ENCODE measurements at regions of chr17 and their contacts with region 1.

Region 1: GRCh38 chr17:41665566-41666236 is 23.0 kb upstream of the EIF1 start:
- DNase-seq: peak; percentile 67
- ATAC-seq: peak; percentile 82
- H3K4me3 ChIP-seq: peak overlapping the region; percentile 73
- H3K27ac ChIP-seq: peak overlapping the region; percentile 67
- H3K4me1 ChIP-seq: peaks cover 39% of the 10 kb centered on the region
- H3K27me3 ChIP-seq: no peaks in the 10 kb centered on the region
- CTCF ChIP-seq: peak; percentile 90 to 97 (median 95); a peak in 5 of 6 replicates
- EP300 ChIP-seq: peak in 1 of 2 experiments; percentile 31; a peak in 1 of 4 replicates
- POLR2A ChIP-seq: peak; percentile 66
- RAD21 ChIP-seq: no peak

Region 2: GRCh38 chr17:40536295-40537171 is 1129.2 kb before region 1 on chr17:
- CTCF ChIA-PET with region 1: interaction called, 11 read pairs
- POLR2A ChIA-PET with region 1: no interaction called
- RAD21 ChIA-PET with region 1: interaction called, 3 read pairs
- SMC1A ChIA-PET with region 1: no interaction called
- in situ Hi-C with region 1: no loop called
- intact Hi-C with region 1: no loop called
- DNase-seq: no peak
- ATAC-seq: no peak
- H3K4me3 ChIP-seq: no peak overlapping the region
- H3K27ac ChIP-seq: no peak overlapping the region
- H3K4me1 ChIP-seq: peaks cover 64% of the 10 kb centered on the region
- H3K27me3 ChIP-seq: no peaks in the 10 kb centered on the region; a peak in 1 of 4 replicates
- CTCF ChIP-seq: no peak
- EP300 ChIP-seq: no peak
- POLR2A ChIP-seq: no peak
- RAD21 ChIP-seq: no peak

Region 3: GRCh38 chr17:40818733-40819527 is 846.8 kb before region 1 on chr17:
- CTCF ChIA-PET with region 1: interaction called, 14 read pairs
- POLR2A ChIA-PET with region 1: interaction called, 3 read pairs
- RAD21 ChIA-PET with region 1: no interaction called
- SMC1A ChIA-PET with region 1: no interaction called
- in situ Hi-C with region 1: no loop called
- intact Hi-C with region 1: no loop called
- DNase-seq: no peak
- ATAC-seq: peak; percentile 91
- H3K4me3 ChIP-seq: peak overlapping the region; percentile 78
- H3K27ac ChIP-seq: peak overlapping the region; percentile 76
- H3K4me1 ChIP-seq: peaks cover 12% of the 10 kb centered on the region
- H3K27me3 ChIP-seq: no peaks in the 10 kb centered on the region
- CTCF ChIP-seq: no peak
- EP300 ChIP-seq: no peak
- POLR2A ChIP-seq: peak; percentile 85
- RAD21 ChIP-seq: no peak

Region 4: DNA sequence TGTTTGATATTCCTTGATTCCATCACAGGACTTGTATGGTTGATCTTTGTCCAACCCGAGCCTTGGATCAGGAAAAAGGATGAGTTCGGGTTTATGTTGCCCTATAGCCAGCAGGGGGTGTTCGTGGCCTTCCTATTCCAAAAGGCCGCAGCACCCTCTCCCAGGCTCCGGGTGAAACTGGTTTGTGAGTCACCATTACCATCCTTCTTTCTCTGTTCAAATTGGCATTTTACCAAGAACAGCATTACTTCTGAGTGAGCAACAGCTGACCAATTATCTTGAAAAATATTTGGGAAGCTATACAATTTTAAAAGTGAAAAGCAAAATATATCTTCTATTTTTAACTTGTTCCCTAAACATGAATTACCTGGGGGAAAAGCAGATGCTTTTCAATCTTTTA is 756.4 kb before region 1 on chr17:
- CTCF ChIA-PET with region 1: interaction called, 29 read pairs
- POLR2A ChIA-PET with region 1: no interaction called
- RAD21 ChIA-PET with region 1: interaction called, 3 read pairs
- SMC1A ChIA-PET with region 1: no interaction called
- in situ Hi-C with region 1: loop called (anchors 5 kb)
- intact Hi-C with region 1: loop called (anchors 1 kb)
- DNase-seq: no peak
- ATAC-seq: peak; percentile 84
- H3K4me3 ChIP-seq: no peak overlapping the region
- H3K27ac ChIP-seq: no peak overlapping the region
- H3K4me1 ChIP-seq: 0 out of 2 replicates have a peak, but pooled peaks cover 2% of the 10 kb centered on the region
- H3K27me3 ChIP-seq: peaks cover 0 to 4% of the 10 kb centered on the region in 2 experiments; a peak in 1 of 4 replicates
- CTCF ChIP-seq: peak; percentile 56 to 72 (median 68)
- EP300 ChIP-seq: no peak
- POLR2A ChIP-seq: no peak
- RAD21 ChIP-seq: peak; percentile 79

Region 5: GRCh38 chr17:41579484-41580243 is 86.0 kb before region 1 on chr17:
- CTCF ChIA-PET with region 1: interaction called, 4 read pairs
- POLR2A ChIA-PET with region 1: no interaction called
- RAD21 ChIA-PET with region 1: interaction called, 14 read pairs
- SMC1A ChIA-PET with region 1: interaction called, 7 read pairs
- in situ Hi-C with region 1: no loop called
- intact Hi-C with region 1: loop called (anchors 5 kb)
- DNase-seq: peak; percentile 21
- ATAC-seq: peak; percentile 98
- H3K4me3 ChIP-seq: no peak overlapping the region
- H3K27ac ChIP-seq: no peak overlapping the region
- H3K4me1 ChIP-seq: no peaks in the 10 kb centered on the region
- H3K27me3 ChIP-seq: no peaks in the 10 kb centered on the region; a peak in 2 of 4 replicates
- CTCF ChIP-seq: peak; percentile 62 to 82 (median 77)
- EP300 ChIP-seq: no peak
- POLR2A ChIP-seq: no peak
- RAD21 ChIP-seq: peak; percentile 52

Region 6: DNA sequence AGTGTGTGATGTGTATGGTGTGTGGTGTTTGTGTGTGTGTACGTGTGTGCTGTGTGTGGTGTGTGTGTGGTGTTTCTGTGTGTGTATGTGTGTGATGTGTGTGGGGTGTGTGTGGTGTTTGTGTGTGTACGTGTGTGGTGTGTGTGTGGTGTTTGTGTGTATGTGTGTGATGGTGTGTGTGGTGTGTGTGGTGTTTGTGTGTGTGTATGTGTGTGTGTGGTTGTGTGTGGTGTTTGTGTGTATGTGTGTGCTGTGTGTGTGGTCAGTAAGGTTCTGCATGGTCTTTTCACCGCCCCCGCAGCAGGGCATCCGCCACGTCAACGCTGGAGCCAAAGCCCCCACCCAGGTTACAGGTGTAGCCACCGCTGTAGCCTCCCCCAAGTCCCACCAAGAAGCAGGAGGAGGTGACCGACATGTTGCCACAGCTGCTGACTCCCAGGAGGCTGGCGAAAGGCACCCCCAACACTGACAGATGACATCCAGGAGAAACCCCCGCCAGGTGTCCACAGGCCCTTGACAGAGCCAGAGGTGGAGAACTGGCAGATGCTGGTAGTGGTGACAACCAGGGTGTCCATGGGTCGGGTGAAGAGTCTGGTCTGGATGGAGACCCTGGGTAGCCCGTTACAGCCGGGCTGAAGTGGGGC is 32.0 kb before region 1 on chr17:
- CTCF ChIA-PET with region 1: no interaction called
- POLR2A ChIA-PET with region 1: no interaction called
- RAD21 ChIA-PET with region 1: no interaction called
- SMC1A ChIA-PET with region 1: no interaction called
- in situ Hi-C with region 1: no loop called
- intact Hi-C with region 1: no loop called
- DNase-seq: no peak
- ATAC-seq: peak; percentile 45
- H3K4me3 ChIP-seq: no peak overlapping the region
- H3K27ac ChIP-seq: no peak overlapping the region
- H3K4me1 ChIP-seq: no peaks in the 10 kb centered on the region
- H3K27me3 ChIP-seq: no peaks in the 10 kb centered on the region; a peak in 1 of 4 replicates
- CTCF ChIP-seq: no peak
- EP300 ChIP-seq: no peak
- POLR2A ChIP-seq: no peak
- RAD21 ChIP-seq: no peak

Region 7: GRCh38 chr17:41648411-41649195 is 17.1 kb before region 1 on chr17:
- CTCF ChIA-PET with region 1: interaction called, 420 read pairs
- POLR2A ChIA-PET with region 1: interaction called, 19 read pairs
- RAD21 ChIA-PET with region 1: interaction called, 193 read pairs
- SMC1A ChIA-PET with region 1: interaction called, 62 read pairs
- in situ Hi-C with region 1: no loop called
- intact Hi-C with region 1: loop called (anchors 1 kb)
- DNase-seq: no peak
- ATAC-seq: peak; percentile 97
- H3K4me3 ChIP-seq: peak overlapping the region; percentile 57; the same call in 1 of the 2 replicates
- H3K27ac ChIP-seq: no peak overlapping the region
- H3K4me1 ChIP-seq: peaks cover 9% of the 10 kb centered on the region
- H3K27me3 ChIP-seq: no peaks in the 10 kb centered on the region
- CTCF ChIP-seq: peak; percentile 90 to 95 (median 91)
- EP300 ChIP-seq: no peak
- POLR2A ChIP-seq: no peak
- RAD21 ChIP-seq: peak; percentile 58

Region 8: DNA sequence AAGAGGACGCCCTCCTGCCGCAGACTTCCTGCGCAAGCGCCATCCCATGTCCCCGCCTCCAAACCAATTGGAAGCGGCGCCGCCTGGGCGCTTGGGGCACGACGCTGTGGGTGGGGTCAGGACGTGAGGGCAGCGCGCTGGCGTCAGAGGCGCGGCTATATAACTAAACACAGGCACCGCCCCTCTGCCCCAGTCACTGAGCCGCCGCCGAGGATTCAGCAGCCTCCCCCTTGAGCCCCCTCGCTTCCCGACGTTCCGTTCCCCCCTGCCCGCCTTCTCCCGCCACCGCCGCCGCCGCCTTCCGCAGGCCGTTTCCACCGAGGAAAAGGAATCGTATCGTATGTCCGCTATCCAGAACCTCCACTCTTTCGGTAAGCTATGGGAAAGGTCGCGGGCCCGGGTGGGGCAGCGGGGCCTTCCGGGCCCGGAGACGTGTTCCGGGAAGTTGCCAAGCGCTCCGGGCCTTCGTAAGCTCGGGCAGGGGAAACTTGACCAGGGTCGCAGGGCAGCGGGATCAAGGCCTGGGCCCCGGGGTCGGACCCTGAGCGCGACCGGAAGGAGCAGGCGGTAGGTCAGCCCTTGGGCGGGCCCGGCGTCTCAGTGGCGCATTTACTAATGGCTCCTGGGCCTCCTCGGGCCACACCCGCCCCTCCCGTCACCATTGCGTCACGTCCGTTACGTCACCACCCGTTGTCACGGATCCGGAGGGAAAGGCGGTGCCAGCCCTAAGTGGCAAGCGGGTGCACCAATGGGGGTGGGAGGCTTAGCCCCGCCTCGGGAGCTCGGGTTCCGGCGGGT is 23.2 kb after region 1 on chr17 and contains the start of gene EIF1:
- CTCF ChIA-PET with region 1: interaction called, 192 read pairs
- POLR2A ChIA-PET with region 1: interaction called, 86 read pairs
- RAD21 ChIA-PET with region 1: interaction called, 117 read pairs
- SMC1A ChIA-PET with region 1: interaction called, 76 read pairs
- in situ Hi-C with region 1: no loop called
- intact Hi-C with region 1: loop called (anchors 2 kb)
- DNase-seq: peak; percentile 98
- ATAC-seq: peak; percentile 85
- H3K4me3 ChIP-seq: peak within 1 kb of the TSS; percentile 87
- H3K27ac ChIP-seq: peak within 1 kb of the TSS; percentile 100
- H3K4me1 ChIP-seq: peaks cover 11% of the 10 kb centered on the region
- H3K27me3 ChIP-seq: no peaks in the 10 kb centered on the region
- CTCF ChIP-seq: no peak
- EP300 ChIP-seq: 0 out of 4 replicates have a peak, but pooled peaks of 1 of the 2 experiments have one; percentile 17
- POLR2A ChIP-seq: peak; percentile 98
- RAD21 ChIP-seq: no peak
- polyA plus RNA-seq, gene EIF1: 670 to 687 TPM

Region 9: GRCh38 chr17:41801374-41802271 is 135.9 kb after region 1 on chr17:
- CTCF ChIA-PET with region 1: no interaction called
- POLR2A ChIA-PET with region 1: no interaction called
- RAD21 ChIA-PET with region 1: no interaction called
- SMC1A ChIA-PET with region 1: no interaction called
- in situ Hi-C with region 1: no loop called
- intact Hi-C with region 1: no loop called
- DNase-seq: no peak
- ATAC-seq: peak; percentile 95
- H3K4me3 ChIP-seq: no peak overlapping the region
- H3K27ac ChIP-seq: no peak overlapping the region
- H3K4me1 ChIP-seq: no peaks in the 10 kb centered on the region
- H3K27me3 ChIP-seq: no peaks in the 10 kb centered on the region
- CTCF ChIP-seq: peak; percentile 92 to 96 (median 95)
- EP300 ChIP-seq: no peak
- POLR2A ChIP-seq: no peak
- RAD21 ChIP-seq: peak; percentile 90

Region 10: DNA sequence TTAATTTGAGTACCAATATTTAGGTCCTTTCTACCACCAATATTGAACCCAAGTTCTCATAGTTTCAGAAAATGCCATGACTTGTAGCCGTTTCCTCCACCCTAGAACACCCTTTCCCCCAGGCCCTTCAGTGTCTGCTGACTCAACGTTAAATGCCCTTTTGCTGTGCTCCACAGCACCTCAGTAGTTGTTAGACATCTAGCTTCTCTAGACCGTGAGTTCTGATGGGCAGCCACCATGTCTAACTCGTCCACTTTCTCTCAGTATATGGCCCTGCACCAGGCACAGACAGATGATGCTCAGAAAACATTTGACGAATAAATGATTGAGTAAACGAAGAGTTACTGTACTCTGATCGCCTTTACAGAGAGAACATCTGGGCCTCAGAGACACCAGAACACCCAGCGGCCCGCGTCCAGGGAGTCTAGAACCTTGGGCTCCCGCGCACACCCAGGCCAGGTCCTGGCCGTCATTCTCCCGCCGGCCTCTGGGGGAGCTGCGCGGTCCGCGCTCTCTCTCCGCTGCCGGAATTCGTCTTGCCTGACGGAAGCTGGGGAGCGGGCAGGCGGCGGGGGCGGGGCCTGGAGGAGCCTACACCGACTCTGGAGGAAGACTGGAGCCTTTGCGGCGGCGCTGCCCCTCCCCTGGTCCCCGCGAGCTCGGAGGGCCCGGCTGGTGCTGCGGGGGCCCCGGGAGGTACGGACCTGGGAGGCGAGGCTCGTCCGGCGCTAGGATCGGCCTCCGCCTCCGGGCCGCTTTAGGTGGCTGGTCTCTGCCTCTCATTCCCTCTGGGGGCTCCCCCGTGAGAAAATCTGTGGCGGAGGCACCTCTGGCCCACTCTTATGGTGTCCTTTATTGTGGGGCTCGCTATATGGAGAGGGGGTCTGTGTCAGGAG is 354.1 kb after region 1 on chr17 and contains the start of gene NKIRAS2:
- CTCF ChIA-PET with region 1: no interaction called
- POLR2A ChIA-PET with region 1: no interaction called
- RAD21 ChIA-PET with region 1: no interaction called
- SMC1A ChIA-PET with region 1: no interaction called
- in situ Hi-C with region 1: no loop called
- intact Hi-C with region 1: no loop called
- DNase-seq: peak; percentile 50
- ATAC-seq: peak; percentile 84
- H3K4me3 ChIP-seq: peak within 1 kb of the TSS; percentile 88
- H3K27ac ChIP-seq: peak within 1 kb of the TSS; percentile 76
- H3K4me1 ChIP-seq: peaks cover 28% of the 10 kb centered on the region
- H3K27me3 ChIP-seq: no peaks in the 10 kb centered on the region
- CTCF ChIP-seq: peak; percentile 92 to 98 (median 98); a peak in 5 of 6 replicates
- EP300 ChIP-seq: no peak
- POLR2A ChIP-seq: peak; percentile 87
- RAD21 ChIP-seq: no peak
- polyA plus RNA-seq, gene NKIRAS2: 6.4 to 6.9 TPM